Activated CD8-positive, alpha-beta T cell treated with anti-CD3 and anti-CD28 coated beads, Interleukin-2, amount 10 ng/mL, durations not matched to agents 7 days and 5 days (primary cell): ENCODE measurements at regions of chr12 and their contacts with region 1.

Region 1: DNA sequence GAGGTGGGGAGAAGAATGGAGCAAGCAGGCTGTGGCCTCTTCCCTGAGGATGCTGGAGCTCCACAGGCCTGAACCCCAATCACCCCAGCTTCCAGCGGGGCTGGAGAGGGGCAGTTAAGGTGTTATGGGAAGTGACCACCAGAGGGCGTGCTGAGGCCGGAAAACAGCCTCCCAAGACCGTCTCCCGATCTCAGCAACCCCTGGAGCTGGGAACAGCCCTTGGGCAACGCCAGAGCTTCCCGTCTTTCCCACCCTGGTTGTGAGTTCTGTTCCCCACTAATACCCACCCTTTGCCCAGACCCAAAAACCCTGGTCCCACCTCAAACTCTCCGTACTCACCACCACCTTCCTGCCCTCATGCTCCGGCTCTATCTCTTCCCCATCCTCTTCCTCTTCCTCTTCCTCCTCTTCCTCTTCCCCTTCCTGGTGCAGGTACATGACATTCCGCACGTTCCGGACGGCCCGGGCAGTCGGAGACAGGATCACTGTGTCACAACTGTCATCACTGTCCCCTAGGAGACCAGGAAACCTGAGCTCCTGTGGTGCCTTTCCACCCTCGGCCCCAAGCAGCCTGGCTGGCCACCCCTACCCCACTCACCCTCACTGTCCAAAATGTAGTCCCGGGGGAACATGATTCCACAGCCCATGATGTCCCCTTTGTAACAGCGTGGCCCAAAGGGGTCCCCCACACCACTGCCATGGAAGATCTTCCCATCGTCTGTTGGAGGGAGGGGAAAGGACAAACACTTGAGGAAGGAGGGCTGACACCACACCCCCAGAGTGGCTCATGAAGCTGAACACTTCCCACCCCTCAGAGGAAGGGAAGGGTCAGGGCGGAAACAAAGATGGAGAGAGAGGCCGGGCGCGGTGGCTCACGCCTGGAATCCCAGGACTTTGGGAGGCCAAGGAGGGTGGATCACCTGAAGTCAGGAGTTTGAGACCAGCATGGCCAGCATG is 12.9 kb downstream of the SPRYD3 start:
- DNase-seq: peak; percentile 79
- ATAC-seq: peak; percentile 79
- H3K4me3 Mint-ChIP-seq: no peak overlapping the region
- H3K27ac Mint-ChIP-seq: peak overlapping the region; percentile 69
- H3K4me1 Mint-ChIP-seq: peaks cover 7% of the 10 kb centered on the region
- H3K27me3 Mint-ChIP-seq: no peaks in the 10 kb centered on the region

Region 2: GRCh38 chr12:53047221-53048042 is 18.8 kb before region 1 on chr12:
- CTCF ChIA-PET with region 1: interaction called, 58 read pairs
- POLR2A ChIA-PET with region 1: no interaction called
- DNase-seq: peak; percentile 68
- ATAC-seq: peak; percentile 79
- H3K4me3 Mint-ChIP-seq: peak overlapping the region; percentile 25
- H3K27ac Mint-ChIP-seq: no peak overlapping the region
- H3K4me1 Mint-ChIP-seq: peaks cover 24% of the 10 kb centered on the region
- H3K27me3 Mint-ChIP-seq: peaks cover 6% of the 10 kb centered on the region

Region 3: DNA sequence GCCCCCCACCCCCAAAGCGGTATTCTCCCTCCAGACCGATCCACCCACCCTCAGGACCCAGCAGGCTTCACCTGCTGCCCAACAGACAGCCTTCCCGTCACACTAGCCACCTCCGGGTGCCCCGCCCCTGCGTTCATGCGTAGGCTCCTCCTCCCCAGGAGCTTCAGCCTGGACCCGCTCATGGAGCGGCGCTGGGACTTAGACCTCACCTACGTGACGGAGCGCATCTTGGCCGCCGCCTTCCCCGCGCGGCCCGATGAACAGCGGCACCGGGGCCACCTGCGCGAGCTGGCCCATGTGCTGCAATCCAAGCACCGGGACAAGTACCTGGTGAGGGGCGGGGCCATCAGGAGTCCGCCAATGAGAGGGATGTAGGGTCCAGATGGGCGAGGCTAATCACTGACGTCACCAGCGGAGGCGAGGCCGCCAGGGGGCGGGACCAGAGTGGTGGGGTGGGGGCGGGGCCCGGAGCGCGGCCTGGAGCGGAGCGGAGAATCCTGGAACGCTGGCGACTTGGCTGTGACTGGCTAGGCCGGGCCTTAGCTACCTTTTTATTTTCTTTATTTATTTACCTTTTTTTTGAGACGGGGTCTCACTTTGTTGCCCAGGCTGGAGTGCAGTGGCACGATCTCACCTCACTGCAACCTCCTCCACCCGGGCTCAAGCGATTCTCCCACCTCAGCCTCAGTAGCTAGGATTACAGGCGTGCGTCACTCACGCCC is 12.0 kb before region 1 on chr12:
- CTCF ChIA-PET with region 1: interaction called, 58 read pairs
- POLR2A ChIA-PET with region 1: no interaction called
- DNase-seq: peak; percentile 96
- ATAC-seq: peak; percentile 94
- H3K4me3 Mint-ChIP-seq: peak overlapping the region; percentile 94
- H3K27ac Mint-ChIP-seq: peak overlapping the region; percentile 94
- H3K4me1 Mint-ChIP-seq: peaks cover 17% of the 10 kb centered on the region
- H3K27me3 Mint-ChIP-seq: no peaks in the 10 kb centered on the region

Region 4: DNA sequence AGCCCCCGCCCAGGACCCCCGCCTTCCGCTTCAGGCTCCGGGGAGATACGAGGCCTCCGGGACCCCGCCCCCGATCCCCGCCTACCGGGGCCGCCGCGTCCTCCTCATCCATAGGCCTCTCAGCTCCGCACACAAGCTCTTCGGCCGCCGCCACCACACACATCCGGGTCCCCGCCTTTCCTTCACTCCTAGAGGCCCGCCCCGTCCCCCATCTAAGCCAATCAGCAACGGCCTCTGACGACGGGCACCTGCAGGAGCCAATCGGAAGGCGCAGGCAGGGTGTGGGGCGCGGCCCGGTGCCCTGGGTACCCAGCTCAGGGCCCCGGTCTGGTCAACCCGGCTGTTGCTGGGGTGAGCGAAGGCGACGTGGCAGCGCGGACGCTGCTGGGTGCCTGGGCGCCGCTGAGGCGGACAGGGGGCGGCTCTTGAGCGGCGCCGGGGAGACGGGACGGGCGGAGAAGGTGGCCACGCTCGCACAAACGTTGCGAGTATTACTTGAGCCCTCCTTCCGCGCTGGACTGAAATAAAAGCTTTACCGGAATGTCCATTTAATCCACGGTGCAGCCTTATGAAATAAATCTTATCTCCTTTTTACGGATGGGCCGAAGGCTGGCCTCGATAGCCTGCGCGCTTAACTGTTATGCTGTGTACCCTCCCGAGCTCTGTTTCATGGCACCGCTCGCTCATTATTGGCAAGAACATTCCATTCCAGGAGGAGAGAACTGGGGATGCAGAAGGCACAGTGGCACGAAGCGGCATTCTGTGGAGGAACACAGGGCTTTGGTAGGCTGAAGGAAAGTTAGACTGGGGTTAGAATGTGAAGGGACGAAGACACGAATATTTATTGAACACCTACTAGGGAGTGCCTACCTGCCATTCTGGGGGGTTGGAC is 13.2 kb after region 1 on chr12 and contains the start of gene SPRYD3:
- CTCF ChIA-PET with region 1: interaction called, 119 read pairs
- POLR2A ChIA-PET with region 1: interaction called, 5 read pairs
- DNase-seq: peak; percentile 97
- ATAC-seq: peak; percentile 99
- H3K4me3 Mint-ChIP-seq: peak within 1 kb of the TSS; percentile 89
- H3K27ac Mint-ChIP-seq: peak within 1 kb of the TSS; percentile 93
- H3K4me1 Mint-ChIP-seq: peaks cover 28% of the 10 kb centered on the region
- H3K27me3 Mint-ChIP-seq: no peaks in the 10 kb centered on the region
- total RNA-seq, gene SPRYD3: 27.2 to 31.2 TPM

Region 5: GRCh38 chr12:53093777-53094393 is 27.6 kb after region 1 on chr12:
- CTCF ChIA-PET with region 1: interaction called, 295 read pairs
- POLR2A ChIA-PET with region 1: interaction called, 4 read pairs
- DNase-seq: no peak
- ATAC-seq: no peak
- H3K4me3 Mint-ChIP-seq: no peak overlapping the region
- H3K27ac Mint-ChIP-seq: no peak overlapping the region
- H3K4me1 Mint-ChIP-seq: peaks cover 31% of the 10 kb centered on the region
- H3K27me3 Mint-ChIP-seq: peaks cover 24% of the 10 kb centered on the region

Region 6: DNA sequence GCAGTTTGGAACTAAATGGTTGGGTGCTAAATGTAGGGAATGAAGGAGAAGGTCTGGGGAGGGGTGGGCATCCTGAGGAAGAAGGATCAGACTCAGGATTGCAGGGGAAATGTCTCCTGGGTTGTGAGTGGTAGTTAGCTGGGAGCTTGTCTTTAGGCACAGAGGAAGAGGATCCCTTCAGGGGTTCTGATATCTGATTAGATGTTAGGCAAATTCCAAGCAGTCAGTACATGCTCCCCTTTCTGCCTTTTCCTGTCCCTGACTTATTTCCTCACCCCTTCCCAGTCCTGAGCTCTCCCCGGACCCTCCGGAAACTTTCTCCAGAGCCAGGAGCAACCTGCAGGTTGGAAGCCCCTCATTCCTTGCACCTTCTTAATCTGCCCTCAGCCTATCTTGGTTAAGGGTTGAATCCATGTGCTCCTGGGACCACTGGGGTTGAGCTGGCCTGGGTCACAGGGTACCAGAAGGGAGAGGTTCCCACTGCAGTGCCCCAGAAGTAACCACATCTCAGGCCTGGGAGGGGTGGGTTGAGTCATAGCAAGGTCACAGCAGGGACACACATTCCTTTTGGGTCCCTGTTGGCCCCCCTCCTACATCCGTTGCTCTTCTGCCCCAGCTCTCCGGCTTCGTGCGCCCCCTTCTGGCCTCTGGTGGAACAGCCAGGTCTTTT is 32.9 kb after region 1 on chr12:
- CTCF ChIA-PET with region 1: interaction called, 295 read pairs
- POLR2A ChIA-PET with region 1: interaction called, 5 read pairs
- DNase-seq: peak; percentile 94
- ATAC-seq: peak; percentile 25
- H3K4me3 Mint-ChIP-seq: peak overlapping the region; percentile 17
- H3K27ac Mint-ChIP-seq: peak overlapping the region; percentile 91
- H3K4me1 Mint-ChIP-seq: peaks cover 68% of the 10 kb centered on the region
- H3K27me3 Mint-ChIP-seq: peaks cover 8% of the 10 kb centered on the region

Region 7: DNA sequence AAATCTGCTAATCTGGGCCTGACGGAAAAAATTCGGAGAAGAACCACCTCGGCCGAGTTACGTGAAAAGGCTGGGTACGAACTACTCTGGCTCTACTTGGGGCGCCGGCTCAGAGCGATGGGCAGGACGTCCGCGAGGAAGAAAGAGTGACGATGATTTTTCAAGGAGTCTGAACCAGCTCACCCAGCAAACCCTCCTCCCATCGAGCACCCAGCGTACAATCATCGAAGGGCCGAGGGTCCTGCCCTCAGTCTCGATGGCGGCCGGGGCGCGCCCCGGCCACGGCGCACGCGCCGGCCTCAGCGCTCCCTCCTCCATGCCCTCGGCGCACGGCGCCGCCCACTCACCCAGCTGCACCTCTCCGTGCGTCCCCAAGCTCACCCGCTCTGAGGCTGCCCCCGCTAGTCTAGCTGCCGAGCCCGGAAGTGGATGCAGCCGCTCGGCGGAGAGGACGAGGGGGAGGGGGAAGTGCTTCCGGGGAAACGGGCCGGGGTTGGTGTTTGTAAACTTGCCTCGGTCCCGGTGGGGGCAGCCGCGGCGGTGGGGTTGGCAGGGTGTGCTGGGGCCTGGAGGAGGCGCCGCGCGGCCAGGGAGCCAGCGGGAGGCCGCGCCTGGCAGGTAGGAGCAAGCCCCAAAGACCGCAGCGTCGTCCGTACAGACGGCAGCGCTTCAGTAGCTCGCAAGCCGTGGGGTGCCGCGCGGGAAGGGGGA is 114.1 kb after region 1 on chr12 and contains the starts of genes CSAD and ZNF740:
- CTCF ChIA-PET with region 1: interaction called, 11 read pairs
- POLR2A ChIA-PET with region 1: no interaction called
- DNase-seq: peak; percentile 98
- ATAC-seq: peak; percentile 97
- H3K4me3 Mint-ChIP-seq: peak within 1 kb of the TSS; percentile 86
- H3K27ac Mint-ChIP-seq: peak within 1 kb of the TSS; percentile 98
- H3K4me1 Mint-ChIP-seq: peaks cover 50% of the 10 kb centered on the region
- H3K27me3 Mint-ChIP-seq: no peaks in the 10 kb centered on the region
- total RNA-seq, gene CSAD: 15.7 to 17.0 TPM
- total RNA-seq, gene ZNF740: 28.2 to 31.4 TPM